Activated CD4-positive, alpha-beta memory T cell treated with anti-CD3 and anti-CD28 coated beads, Interleukin-2, amount 10 ng/mL, durations not matched to agents 7 days and 5 days (primary cell): ENCODE measurements at regions of chr2 and their contacts with region 1.

Region 1: GRCh38 chr2:176140513-176141317 is 10.6 kb upstream of the HOXD4 start:
- DNase-seq: peak; percentile 70
- H3K4me3 Mint-ChIP-seq: peak overlapping the region; percentile 9
- H3K27ac Mint-ChIP-seq: no peak overlapping the region
- H3K4me1 Mint-ChIP-seq: peaks cover 22% of the 10 kb centered on the region
- H3K27me3 Mint-ChIP-seq: peaks cover 74% of the 10 kb centered on the region

Region 2: DNA sequence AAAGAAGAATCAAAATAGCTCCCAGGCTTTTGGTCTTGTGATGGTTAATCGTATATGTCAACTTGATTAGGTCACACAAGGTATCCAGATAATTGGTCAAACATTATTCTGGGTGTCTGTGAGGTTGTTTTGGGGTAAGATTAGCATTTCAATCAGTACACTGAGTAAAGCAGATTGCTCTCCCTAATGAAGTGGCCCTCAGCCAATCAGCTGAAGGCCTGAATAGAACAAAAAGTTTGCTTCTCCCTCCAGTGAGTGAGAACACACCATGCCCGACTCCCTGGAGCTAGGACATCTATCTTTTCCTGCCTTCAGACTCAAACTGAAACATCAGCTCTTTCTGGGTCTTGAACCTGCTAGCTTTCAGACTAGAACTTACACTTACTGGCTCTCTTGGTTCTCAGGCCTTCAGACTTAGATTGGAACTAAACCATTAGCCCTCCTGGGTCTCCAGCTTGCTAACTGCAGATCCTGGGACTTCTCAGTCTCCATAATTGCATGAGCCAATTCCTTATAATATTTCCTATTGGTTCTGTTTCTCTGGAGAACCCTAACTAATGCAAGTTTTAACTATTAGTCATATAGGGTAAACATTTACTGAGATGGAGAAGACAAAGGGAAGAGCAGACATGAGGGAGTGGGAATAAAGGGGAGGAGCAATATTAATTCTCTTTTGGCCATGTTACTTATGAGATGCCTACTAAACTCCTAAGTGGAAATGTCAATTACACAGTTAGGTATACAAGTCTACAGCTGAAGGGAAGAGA is 164.1 kb before region 1 on chr2:
- CTCF ChIA-PET with region 1: no interaction called
- POLR2A ChIA-PET with region 1: no interaction called
- DNase-seq: no peak
- H3K4me3 Mint-ChIP-seq: no peak overlapping the region
- H3K27ac Mint-ChIP-seq: no peak overlapping the region
- H3K4me1 Mint-ChIP-seq: no peaks in the 10 kb centered on the region
- H3K27me3 Mint-ChIP-seq: no peaks in the 10 kb centered on the region

Region 3: DNA sequence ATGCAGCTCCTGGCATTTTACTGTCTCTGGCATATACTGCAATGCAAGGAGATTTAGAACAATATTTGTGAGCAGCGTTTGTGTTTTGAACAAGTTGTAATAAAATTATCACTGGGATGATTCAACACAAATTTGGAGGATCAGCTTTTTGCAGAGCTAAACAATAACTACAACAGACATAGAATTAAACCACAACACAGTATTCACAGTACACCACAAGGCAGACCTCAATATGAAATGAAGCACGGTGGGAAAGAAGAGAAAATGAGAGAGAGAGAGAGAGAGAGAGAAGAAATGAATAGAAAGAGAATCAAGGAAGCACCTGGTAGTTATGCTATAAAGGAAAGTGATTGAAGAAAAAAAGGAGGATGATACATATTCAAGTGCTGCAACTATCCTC is 87.2 kb after region 1 on chr2:
- CTCF ChIA-PET with region 1: no interaction called
- POLR2A ChIA-PET with region 1: no interaction called
- DNase-seq: no peak
- H3K4me3 Mint-ChIP-seq: no peak overlapping the region
- H3K27ac Mint-ChIP-seq: no peak overlapping the region
- H3K4me1 Mint-ChIP-seq: no peaks in the 10 kb centered on the region
- H3K27me3 Mint-ChIP-seq: peaks cover 16% of the 10 kb centered on the region

Region 4: DNA sequence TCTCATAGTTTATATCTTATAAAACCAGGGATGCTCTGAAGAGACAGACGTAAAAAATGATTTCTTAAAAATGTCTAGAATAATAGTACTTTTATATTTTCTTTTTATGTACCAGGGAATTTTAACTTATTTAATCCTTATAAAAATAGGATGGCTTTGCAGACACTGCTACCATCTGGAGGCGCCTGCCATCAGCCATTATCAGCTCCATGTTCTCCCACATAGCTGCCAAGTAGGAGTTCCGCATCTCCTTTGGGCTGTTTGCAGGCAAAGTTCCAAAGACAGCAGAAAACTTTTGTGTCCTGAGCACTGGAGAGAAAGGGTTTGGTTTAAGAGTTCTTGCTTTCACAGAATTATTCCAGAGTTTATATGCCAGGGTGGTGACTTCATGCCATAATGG is 197.7 kb after region 1 on chr2:
- CTCF ChIA-PET with region 1: no interaction called
- POLR2A ChIA-PET with region 1: no interaction called
- DNase-seq: no peak
- H3K4me3 Mint-ChIP-seq: no peak overlapping the region
- H3K27ac Mint-ChIP-seq: no peak overlapping the region
- H3K4me1 Mint-ChIP-seq: no peaks in the 10 kb centered on the region
- H3K27me3 Mint-ChIP-seq: no peaks in the 10 kb centered on the region

Region 5: DNA sequence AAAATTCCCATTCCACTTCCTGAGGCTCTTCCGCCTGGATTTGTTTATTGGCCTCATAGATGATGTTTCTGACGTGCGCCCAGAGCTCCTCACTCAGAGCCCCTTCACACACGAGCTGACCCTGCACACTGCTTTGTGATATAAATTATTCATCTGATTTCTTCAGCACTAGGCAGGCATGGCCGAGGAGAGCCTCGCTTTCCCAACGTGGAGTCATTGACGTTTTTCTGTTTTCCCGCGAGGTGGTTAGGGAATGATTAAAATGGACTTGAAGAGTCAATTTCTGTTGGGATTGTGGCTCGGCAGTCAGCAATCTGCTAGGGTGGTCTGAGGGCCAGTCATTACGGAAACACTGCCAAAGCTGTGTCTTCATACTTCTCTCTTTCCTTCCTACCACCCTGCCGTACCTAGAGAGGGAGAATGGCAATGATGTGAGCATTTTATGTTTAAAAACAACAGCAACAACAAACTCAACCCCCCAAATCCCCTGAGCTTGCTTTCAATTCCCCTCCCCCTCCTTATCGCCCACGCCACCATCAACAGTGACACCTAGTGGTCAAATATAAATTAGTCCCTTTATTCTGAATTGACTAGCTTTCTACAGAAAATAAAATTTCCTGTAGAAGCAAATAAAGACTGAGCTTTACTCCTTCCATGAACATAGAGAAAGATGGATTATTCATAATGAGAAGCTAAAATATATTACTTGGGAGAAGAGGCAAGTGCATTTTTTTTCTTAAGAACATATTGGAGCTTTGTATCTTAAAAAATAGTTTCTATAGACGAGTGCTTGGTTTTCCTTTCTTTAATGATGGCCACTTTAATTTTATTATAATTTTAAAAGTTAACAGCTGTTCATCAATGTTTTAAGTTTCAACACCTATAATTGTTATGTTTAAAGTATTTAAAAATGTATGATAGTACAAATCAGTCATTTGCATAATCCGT is 413.7 kb after region 1 on chr2:
- CTCF ChIA-PET with region 1: interaction called, 12 read pairs
- POLR2A ChIA-PET with region 1: no interaction called
- DNase-seq: peak; percentile 23
- H3K4me3 Mint-ChIP-seq: peak overlapping the region; percentile 48
- H3K27ac Mint-ChIP-seq: no peak overlapping the region
- H3K4me1 Mint-ChIP-seq: peaks cover 12% of the 10 kb centered on the region
- H3K27me3 Mint-ChIP-seq: peaks cover 47% of the 10 kb centered on the region

Region 6: GRCh38 chr2:176638167-176639015 is 497.7 kb after region 1 on chr2:
- CTCF ChIA-PET with region 1: interaction called, 25 read pairs
- POLR2A ChIA-PET with region 1: no interaction called
- DNase-seq: peak; percentile 61
- H3K4me3 Mint-ChIP-seq: peak overlapping the region; percentile 51
- H3K27ac Mint-ChIP-seq: no peak overlapping the region
- H3K4me1 Mint-ChIP-seq: peaks cover 1% of the 10 kb centered on the region
- H3K27me3 Mint-ChIP-seq: peaks cover 63% of the 10 kb centered on the region